Activated naive CD4-positive, alpha-beta T cell treated with anti-CD3 and anti-CD28 coated beads for 36 hours (primary cell): ENCODE measurements at regions of chr6 and their contacts with region 1.

Region 1: DNA sequence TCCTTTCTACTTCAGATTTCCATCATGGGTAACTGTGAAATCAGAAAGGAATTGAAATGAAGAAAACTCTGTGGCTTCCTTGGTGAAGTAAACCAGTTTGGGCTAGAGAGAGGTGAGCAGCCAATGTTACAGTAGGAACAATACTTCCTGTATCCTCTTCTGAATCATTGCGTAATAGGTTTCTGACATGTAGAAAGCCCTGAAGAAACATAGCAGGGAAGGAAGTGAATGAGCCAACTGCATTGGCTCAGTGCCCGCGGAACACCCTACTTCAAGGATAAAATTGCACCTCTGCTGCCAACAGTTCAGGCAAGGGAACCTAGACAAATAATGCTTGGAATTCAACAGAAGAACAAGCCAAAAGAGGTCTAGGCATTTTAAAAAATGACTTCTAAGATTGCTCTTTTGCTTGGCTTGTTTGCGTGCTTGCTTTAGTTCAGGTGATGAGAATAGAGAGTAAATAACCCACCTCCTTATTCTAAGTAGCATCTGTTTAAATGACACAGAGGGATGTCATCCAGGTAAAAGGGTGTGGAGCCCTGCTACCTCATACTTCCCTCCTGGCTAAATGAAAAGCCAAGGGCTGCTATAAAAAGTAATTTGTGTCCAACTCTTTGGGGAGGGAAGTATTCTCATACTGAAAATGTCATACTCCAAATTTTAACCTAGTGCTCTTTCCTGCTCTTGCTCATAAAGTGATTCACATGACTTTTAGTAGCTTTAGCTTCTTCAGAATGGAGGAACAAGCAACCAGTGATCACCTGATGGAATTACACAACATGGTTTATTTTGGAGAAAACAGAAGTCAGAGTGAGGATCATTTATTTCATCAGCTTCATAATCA is 30.0 kb upstream of the AKIRIN2 start:
- DNase-seq: peak; percentile 70
- H3K4me3 Mint-ChIP-seq: no peak overlapping the region
- H3K27ac Mint-ChIP-seq: peak overlapping the region; percentile 15
- H3K4me1 Mint-ChIP-seq: peaks cover 26% of the 10 kb centered on the region
- H3K27me3 Mint-ChIP-seq: no peaks in the 10 kb centered on the region

Region 2: DNA sequence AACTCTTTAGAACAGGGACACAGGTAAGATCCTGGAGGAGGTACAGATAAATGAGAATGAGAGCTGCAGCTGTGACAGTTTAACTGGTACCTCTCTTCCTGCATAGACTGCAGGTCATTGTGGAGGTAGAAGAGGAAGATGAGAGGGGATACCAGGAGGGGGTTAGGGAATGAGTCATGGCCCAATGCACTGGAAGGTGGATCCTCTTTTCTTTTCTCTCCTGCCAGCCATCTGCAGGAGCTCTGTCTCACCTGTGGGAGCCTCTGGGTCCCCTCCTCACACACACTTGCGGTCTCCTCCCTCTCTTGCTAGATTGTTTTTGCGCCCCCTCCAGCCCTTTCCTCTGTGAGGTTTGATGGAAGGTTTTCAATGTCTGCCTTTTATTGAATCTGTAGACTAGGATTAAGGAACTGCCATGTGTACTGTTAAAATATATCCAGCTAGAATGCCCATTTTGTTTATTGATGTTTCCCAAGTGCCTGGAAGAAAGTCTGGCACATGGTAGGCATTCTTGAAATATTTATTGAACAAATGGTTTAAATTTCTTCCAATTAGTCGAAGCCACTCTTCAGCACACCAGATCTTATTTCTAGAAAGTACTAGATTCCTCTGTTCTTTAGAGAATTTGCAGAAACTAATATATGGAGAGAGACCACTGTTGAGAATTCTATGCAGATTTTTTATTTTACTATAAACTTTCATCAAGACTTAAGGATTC is 374.4 kb before region 1 on chr6:
- CTCF ChIA-PET with region 1: no interaction called
- intact Hi-C with region 1: no loop called
- DNase-seq: no peak
- H3K4me3 Mint-ChIP-seq: no peak overlapping the region
- H3K27ac Mint-ChIP-seq: no peak overlapping the region
- H3K4me1 Mint-ChIP-seq: no peaks in the 10 kb centered on the region
- H3K27me3 Mint-ChIP-seq: no peaks in the 10 kb centered on the region

Region 3: GRCh38 chr6:87472525-87473418 is 259.3 kb before region 1 on chr6 and contains the start of gene SLC35A1:
- CTCF ChIA-PET with region 1: no interaction called
- intact Hi-C with region 1: no loop called
- DNase-seq: peak; percentile 80
- H3K4me3 Mint-ChIP-seq: peak within 1 kb of the TSS; percentile 95
- H3K27ac Mint-ChIP-seq: peak within 1 kb of the TSS; percentile 92
- H3K4me1 Mint-ChIP-seq: peaks cover 15% of the 10 kb centered on the region
- H3K27me3 Mint-ChIP-seq: peaks cover 4% of the 10 kb centered on the region
- total RNA-seq, gene SLC35A1: 6.7 to 6.8 TPM

Region 4: DNA sequence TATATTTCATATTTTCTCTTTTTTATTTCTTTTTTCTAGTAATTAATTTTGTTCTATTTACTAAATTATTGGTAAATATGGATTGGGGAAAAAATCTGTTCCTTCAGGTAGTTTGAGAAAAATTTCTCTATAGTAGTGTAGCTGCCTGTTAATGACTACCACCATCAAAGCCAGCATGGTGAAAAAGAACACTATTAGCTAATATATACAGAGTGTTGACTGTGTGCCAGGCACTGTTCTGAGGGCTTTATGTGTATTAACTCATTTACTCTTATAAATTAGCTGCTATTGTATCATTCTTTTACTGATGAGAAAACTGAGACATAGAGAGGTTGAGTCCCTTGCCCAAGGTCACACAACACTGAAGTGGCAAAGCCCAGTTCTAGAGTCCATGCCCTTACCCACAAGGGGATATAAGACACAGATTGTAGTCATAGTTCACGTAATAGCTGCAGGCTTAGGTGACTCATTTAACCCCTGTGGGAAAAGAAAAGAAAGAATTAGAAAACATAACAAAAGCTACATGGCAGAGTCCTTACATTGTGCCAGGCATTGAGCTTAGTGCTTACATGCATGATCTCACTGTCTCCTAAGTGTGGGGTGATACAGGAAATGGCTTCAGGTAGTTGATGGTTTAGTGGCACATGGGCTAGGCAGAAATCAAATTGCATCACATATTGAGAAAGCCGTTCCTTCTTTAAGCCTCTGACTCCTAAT is 17.8 kb before region 1 on chr6:
- CTCF ChIA-PET with region 1: no interaction called
- intact Hi-C with region 1: loop called (anchors 1 kb)
- DNase-seq: peak; percentile 12
- H3K4me3 Mint-ChIP-seq: no peak overlapping the region
- H3K27ac Mint-ChIP-seq: no peak overlapping the region
- H3K4me1 Mint-ChIP-seq: peaks cover 5% of the 10 kb centered on the region
- H3K27me3 Mint-ChIP-seq: no peaks in the 10 kb centered on the region

Region 5: GRCh38 chr6:87742106-87742505 is 10.1 kb after region 1 on chr6:
- CTCF ChIA-PET with region 1: no interaction called
- intact Hi-C with region 1: loop called (anchors 1 kb)
- DNase-seq: peak; percentile 76
- H3K4me3 Mint-ChIP-seq: no peak overlapping the region
- H3K27ac Mint-ChIP-seq: no peak overlapping the region
- H3K4me1 Mint-ChIP-seq: peaks cover 26% of the 10 kb centered on the region
- H3K27me3 Mint-ChIP-seq: no peaks in the 10 kb centered on the region

Region 6: GRCh38 chr6:87766211-87766610 is 34.2 kb after region 1 on chr6:
- CTCF ChIA-PET with region 1: no interaction called
- intact Hi-C with region 1: no loop called
- DNase-seq: no peak
- H3K4me3 Mint-ChIP-seq: no peak overlapping the region
- H3K27ac Mint-ChIP-seq: no peak overlapping the region
- H3K4me1 Mint-ChIP-seq: no peaks in the 10 kb centered on the region
- H3K27me3 Mint-ChIP-seq: no peaks in the 10 kb centered on the region